Calu3 (cell line): ENCODE measurements at regions of chr13 and their contacts with region 1.

Region 1: GRCh38 chr13:33285420-33286124 is at the start of gene STARD13:
- DNase-seq: peak; percentile 88
- H3K4me3 Mint-ChIP-seq: peak within 1 kb of the TSS; percentile 83
- H3K27ac Mint-ChIP-seq: peak within 1 kb of the TSS; percentile 95
- H3K4me1 Mint-ChIP-seq: peaks cover 37% of the 10 kb centered on the region
- H3K27me3 Mint-ChIP-seq: no peaks in the 10 kb centered on the region
- CTCF ChIP-seq: no peak
- total RNA-seq, gene STARD13: 8.6 and 11.3 TPM in 2 replicates

Region 2: DNA sequence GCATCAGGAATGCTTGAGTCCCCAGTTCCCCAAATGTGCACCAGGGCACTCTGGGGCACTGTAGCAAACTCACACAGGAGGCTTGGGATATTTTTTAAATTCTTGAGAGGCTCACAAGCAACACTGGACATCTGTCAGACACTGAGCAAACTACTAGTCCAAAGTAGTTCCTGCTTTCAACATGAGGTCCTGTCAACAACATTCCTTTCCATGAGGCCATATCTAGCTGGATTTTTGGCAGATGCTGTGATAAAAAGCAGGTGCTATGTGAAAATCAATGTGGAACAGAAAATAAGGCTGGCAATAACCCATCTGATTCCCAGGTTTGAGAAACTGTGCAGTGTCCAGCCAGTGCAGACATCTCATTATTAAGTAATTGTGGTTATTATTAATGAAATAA is 50.5 kb before region 1 on chr13:
- CTCF ChIA-PET with region 1: no interaction called
- intact Hi-C with region 1: loop called (anchors 2 kb)
- DNase-seq: no peak
- H3K4me3 Mint-ChIP-seq: no peak overlapping the region
- H3K27ac Mint-ChIP-seq: no peak overlapping the region
- H3K4me1 Mint-ChIP-seq: peaks cover 10% of the 10 kb centered on the region
- H3K27me3 Mint-ChIP-seq: no peaks in the 10 kb centered on the region
- CTCF ChIP-seq: no peak

Region 3: DNA sequence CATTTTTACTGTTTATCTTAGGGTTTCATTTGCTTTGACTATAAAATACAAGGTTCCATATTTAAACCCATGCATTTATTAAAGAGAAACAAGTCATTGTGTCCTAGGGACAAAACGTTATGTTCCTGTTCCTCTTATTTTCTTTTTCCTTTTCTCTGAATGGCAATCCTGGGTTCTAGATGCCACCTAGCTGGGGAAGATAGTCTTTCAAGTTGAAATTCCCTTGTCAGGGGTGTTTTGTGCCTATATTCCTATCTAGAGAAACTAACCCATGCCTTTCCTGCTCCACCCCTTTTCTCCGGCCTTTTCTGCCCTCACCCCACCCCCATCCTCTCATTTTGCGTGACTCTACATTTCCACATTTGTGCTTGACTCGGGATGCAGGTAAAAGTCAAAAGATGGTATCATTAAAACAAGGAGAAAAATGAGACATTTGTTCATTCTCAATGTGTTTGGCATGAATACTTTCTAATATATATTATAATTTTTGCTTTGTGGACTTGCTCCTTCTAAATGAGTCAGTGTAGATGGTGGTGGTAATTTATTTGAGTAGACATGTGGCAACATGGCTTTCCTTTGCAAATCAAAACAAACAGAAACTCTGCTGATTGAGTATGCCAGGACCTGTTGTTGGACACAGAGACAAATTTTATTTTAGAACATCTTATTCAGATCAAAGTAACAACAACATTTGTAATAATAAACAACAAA is 26.7 kb after region 1 on chr13:
- CTCF ChIA-PET with region 1: no interaction called
- intact Hi-C with region 1: no loop called
- DNase-seq: no peak
- H3K4me3 Mint-ChIP-seq: no peak overlapping the region
- H3K27ac Mint-ChIP-seq: no peak overlapping the region
- H3K4me1 Mint-ChIP-seq: no peaks in the 10 kb centered on the region
- H3K27me3 Mint-ChIP-seq: no peaks in the 10 kb centered on the region
- CTCF ChIP-seq: no peak

Region 4: GRCh38 chr13:33441015-33441414 is 155.4 kb after region 1 on chr13:
- CTCF ChIA-PET with region 1: no interaction called
- intact Hi-C with region 1: loop called (anchors 10 kb)
- DNase-seq: peak; percentile 33
- H3K4me3 Mint-ChIP-seq: no peak overlapping the region
- H3K27ac Mint-ChIP-seq: no peak overlapping the region
- H3K4me1 Mint-ChIP-seq: peaks cover 9% of the 10 kb centered on the region
- H3K27me3 Mint-ChIP-seq: no peaks in the 10 kb centered on the region
- CTCF ChIP-seq: no peak